ENCODE measurements at regions of chr9 and their contacts with region 1.

Region 1: GRCh38 chr9:110256380-110257096 is at the start of gene TXN:
- DNase-seq: peak; percentile 53 to 86 (median 70)
- ATAC-seq: peak; percentile 80 to 86 (median 84)
- H3K4me3 ChIP-seq: peak within 1 kb of the TSS; percentile 87 to 90
- H3K4me3 Mint-ChIP-seq: peak within 1 kb of the TSS; percentile 92 to 97 (median 96)
- H3K27ac ChIP-seq: peak within 1 kb of the TSS; percentile 68
- H3K27ac Mint-ChIP-seq: peak within 1 kb of the TSS; percentile 95 to 96
- H3K4me1 ChIP-seq: peaks cover 0 to 29% of the 10 kb centered on the region in 2 experiments
- H3K4me1 Mint-ChIP-seq: peaks cover 34 to 40% (median 37%) of the 10 kb centered on the region in 3 donors
- H3K27me3 ChIP-seq: no peaks in the 10 kb centered on the region
- H3K27me3 Mint-ChIP-seq: no peaks in the 10 kb centered on the region
- total RNA-seq, gene TXN: 38.3 to 63.4 (median 47.9) TPM

Region 2: DNA sequence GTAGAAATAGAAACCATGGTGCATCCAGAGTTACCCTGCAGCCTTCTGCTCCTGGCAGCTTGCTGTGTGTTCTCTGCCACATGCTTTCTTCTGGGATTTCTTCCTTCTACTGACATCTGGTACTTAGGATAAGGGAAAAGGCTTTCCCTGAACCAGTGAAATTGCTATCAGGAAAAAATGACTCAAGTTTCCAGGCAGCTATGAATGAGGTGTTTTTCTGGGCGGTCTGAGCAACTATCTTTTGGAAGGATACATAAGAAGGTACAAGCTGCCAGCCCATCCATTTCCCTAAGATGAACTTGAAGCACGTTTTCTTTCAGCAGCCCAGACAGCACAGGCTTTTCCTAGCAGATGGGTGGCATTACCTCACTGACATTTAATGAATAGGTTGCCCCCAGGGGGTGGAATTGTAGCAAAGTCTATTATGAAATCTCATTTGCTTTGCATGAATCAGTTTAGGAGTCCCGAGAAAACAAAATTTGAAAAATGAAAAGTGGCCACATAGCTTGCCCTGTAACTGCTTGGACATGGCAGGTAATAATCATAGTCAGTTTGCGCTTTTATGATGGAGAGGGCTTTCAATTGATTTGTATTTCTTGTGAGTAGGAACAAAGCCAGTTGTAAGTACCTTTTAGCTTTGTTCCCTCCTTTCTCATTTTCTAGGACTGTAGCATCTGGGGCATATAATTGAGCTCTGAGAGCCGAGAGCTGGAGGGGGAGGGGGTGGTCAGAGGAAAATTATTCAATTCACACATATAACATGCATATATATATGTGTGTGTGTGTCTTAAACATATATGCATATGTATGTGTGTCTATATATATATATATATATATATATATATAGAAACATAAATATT is 157.1 kb before region 1 on chr9:
- CTCF ChIA-PET with region 1: no interaction called
- POLR2A ChIA-PET with region 1: interaction called in 1 of 2 experiments, 10 read pairs
- DNase-seq: no peak
- ATAC-seq: no peak
- H3K4me3 ChIP-seq: no peak overlapping the region
- H3K4me3 Mint-ChIP-seq: no peak overlapping the region
- H3K27ac ChIP-seq: no peak overlapping the region
- H3K27ac Mint-ChIP-seq: no peak overlapping the region
- H3K4me1 ChIP-seq: no peaks in the 10 kb centered on the region
- H3K4me1 Mint-ChIP-seq: peaks cover 0 to 6% (median 0%) of the 10 kb centered on the region in 3 donors
- H3K27me3 ChIP-seq: no peaks in the 10 kb centered on the region
- H3K27me3 Mint-ChIP-seq: no peaks in the 10 kb centered on the region